Psoas muscle (tissue), 8 donors: ENCODE measurements at regions of chrX and their contacts with region 1.

Region 1: GRCh38 chrX:41084044-41084892 is 977 bp upstream of the USP9X start:
- DNase-seq: peak; percentile 99 to 100
- ATAC-seq: peak; percentile 80 to 87 (median 82)
- H3K4me3 ChIP-seq: peak overlapping the region; percentile 96
- H3K27ac ChIP-seq: peak overlapping the region; percentile 100
- H3K4me1 ChIP-seq: peaks cover 15% of the 10 kb centered on the region
- H3K27me3 ChIP-seq: no peaks in the 10 kb centered on the region
- CTCF ChIP-seq: no peak

Region 2: GRCh38 chrX:40945361-40945713 is 138.9 kb before region 1 on chrX:
- intact Hi-C with region 1: loop called in 1 of 2 experiments (anchors 10 kb)
- DNase-seq: no peak
- ATAC-seq: peak; percentile 92 to 97 (median 94)
- H3K4me3 ChIP-seq: no peak overlapping the region
- H3K27ac ChIP-seq: peak overlapping the region; percentile 74
- H3K4me1 ChIP-seq: peaks cover 4% of the 10 kb centered on the region
- H3K27me3 ChIP-seq: peaks cover 0 to 13% (median 0%) of the 10 kb centered on the region in 3 donors
- CTCF ChIP-seq: no peak

Region 3: DNA sequence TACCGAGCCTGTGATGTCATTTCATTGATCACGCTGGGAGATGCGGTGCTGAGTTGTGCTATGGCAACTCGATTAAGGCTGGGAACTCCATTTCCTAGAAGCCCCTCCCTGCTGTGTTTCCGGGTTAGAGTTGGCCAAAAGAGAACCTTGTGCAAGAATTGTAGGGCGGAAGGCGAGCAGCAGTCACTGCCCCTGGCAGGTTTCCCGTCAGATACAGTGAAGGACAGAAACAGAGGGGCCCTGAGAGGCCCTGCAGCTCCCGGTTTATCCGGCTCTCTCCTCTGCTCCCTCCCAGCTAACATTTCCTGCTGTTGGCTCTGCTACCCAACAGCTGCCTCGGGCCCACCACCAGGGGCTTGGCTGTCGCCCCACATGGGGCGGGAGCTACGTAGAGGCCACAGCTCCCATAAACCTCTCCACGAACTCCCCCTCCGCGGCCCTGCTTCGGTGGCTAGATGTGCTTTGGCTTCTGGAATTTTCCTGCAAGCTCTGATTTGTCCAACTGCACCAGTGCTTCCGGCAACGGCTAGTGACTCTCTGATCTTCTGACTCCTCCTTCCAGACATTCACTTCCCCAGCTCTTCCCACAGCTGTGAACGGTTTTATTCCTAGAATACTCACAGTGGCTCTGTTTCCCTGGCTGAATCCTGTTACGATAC is 74.0 kb before region 1 on chrX:
- intact Hi-C with region 1: loop called (anchors 2 to 5 kb)
- DNase-seq: peak; percentile 73 to 83
- ATAC-seq: peak; percentile 86 to 92 (median 90)
- H3K4me3 ChIP-seq: peak overlapping the region; percentile 53
- H3K27ac ChIP-seq: peak overlapping the region; percentile 83
- H3K4me1 ChIP-seq: peaks cover 6% of the 10 kb centered on the region
- H3K27me3 ChIP-seq: peaks cover 0 to 26% (median 0%) of the 10 kb centered on the region in 3 donors
- CTCF ChIP-seq: peak; percentile 24

Region 4: GRCh38 chrX:41116948-41117347 is 32.7 kb after region 1 on chrX:
- intact Hi-C with region 1: loop called in 1 of 2 experiments (anchors 2 kb)
- DNase-seq: no peak
- ATAC-seq: peak in 1 of 4 donors; percentile 18
- H3K4me3 ChIP-seq: no peak overlapping the region
- H3K27ac ChIP-seq: no peak overlapping the region
- H3K4me1 ChIP-seq: peaks cover 33% of the 10 kb centered on the region
- H3K27me3 ChIP-seq: no peaks in the 10 kb centered on the region
- CTCF ChIP-seq: no peak